ENCODE measurements at regions of chr4 and their contacts with region 1.

Region 1: DNA sequence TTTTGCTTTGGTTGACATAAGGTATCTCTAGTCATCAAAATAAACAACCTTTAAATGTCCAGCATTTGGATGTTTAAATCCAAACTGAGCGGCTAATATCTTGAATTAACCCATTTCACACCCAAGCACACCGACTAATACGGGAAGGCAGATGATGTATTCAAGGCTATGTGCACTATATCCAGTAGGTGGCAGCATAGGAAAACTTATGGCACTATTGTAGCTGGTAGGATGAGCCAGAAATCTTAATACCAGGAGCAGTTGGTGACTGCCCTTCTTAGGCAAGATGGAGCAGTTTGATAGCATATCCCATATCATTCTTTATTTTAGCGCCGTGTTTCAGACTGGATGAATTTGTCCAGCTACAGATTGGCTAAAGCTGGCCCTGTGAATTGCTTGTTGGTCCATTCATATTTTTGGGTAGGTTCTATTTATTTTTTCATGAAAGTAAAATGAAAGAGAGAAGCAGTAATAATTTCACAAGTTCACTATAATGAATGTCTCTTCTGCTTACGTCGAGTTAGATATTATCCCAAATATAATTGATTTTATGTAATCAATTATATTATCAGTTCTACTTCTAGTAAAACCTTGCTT is 24.4 kb downstream of the UCHL1 start:
- DNase-seq: peak; percentile 64
- H3K4me3 ChIP-seq: no peak overlapping the region
- H3K27ac ChIP-seq: no peak overlapping the region
- H3K4me1 ChIP-seq: no peaks in the 10 kb centered on the region
- H3K27me3 ChIP-seq: no peaks in the 10 kb centered on the region
- CTCF ChIP-seq: peak; percentile 75 to 94 (median 83)
- EP300 ChIP-seq: no peak
- POLR2A ChIP-seq: no peak

Region 2: GRCh38 chr4:40699648-40700047 is 581.5 kb before region 1 on chr4:
- intact Hi-C with region 1: no loop called
- DNase-seq: no peak
- H3K4me3 ChIP-seq: no peak overlapping the region
- H3K27ac ChIP-seq: no peak overlapping the region
- H3K4me1 ChIP-seq: no peaks in the 10 kb centered on the region
- H3K27me3 ChIP-seq: no peaks in the 10 kb centered on the region
- CTCF ChIP-seq: no peak
- EP300 ChIP-seq: no peak
- POLR2A ChIP-seq: no peak

Region 3: DNA sequence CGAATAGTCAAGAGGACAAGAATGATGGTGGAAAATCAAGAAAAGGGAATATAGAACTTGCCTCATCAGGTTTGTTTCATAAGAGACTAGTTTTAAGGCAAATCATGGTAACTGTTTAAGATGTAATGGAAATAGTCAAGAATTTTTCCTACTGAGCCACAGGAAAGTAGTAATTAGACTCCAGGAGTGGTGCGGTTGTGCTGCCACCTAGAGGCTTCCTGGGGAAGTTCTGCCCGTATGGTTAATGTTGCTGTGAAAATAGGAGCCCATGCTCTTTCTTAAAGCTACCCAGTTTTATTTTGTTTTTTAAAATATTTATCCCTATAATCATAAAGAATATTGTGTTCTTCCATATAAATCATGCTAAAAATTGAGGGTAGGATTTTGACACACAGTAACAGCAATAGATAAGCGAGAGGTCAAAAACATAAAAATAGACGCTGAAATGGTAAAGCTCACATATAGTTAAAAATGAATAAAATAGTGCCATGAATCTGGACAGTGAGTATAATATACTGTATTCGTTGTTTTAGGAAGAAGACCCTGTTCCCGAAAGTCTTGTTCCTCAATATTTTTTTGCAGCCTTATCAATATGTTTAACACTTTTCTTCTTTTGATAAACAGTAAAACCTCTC is 380.4 kb after region 1 on chr4:
- intact Hi-C with region 1: loop called (anchors 1 kb)
- DNase-seq: no peak
- H3K4me3 ChIP-seq: no peak overlapping the region
- H3K27ac ChIP-seq: no peak overlapping the region
- H3K4me1 ChIP-seq: peaks cover 0 to 6% (median 1%) of the 10 kb centered on the region in 4 donors
- H3K27me3 ChIP-seq: no peaks in the 10 kb centered on the region
- CTCF ChIP-seq: peak; percentile 48 to 95 (median 68)
- EP300 ChIP-seq: no peak
- POLR2A ChIP-seq: no peak

Region 4: DNA sequence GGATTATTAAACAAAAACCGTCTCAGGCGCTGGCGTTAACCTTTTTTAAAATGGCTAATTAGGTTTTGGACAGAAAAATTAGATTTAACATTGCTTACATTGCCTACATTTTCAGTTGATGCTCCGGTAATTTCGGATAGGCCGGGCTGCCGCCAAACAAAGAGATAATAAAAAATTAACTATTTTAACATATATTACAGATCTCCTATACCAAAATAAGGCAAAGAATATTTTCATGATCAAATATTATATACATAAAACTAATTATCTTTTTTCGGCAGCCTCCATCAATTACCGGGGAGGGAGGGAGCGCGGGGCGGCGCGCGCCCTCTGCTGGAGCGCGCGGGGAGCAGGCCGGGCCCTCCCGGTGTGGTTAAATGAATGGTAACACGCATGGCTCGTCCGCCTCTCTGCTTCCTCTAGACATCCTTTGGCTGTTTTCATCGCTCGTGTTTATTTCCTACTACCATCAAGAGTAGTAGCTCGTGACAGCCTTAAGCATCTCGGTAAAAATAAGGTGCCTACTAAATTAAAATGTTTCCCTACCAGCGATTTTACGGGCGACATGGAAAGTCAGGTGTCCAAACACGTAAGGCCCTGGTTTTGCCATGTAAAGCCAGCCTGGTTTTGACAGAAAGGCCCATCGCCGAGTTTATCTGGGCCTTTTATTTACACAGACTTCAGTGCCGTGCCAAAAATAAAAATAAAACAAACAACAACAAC is 601.6 kb after region 1 on chr4:
- intact Hi-C with region 1: loop called (anchors 5 kb)
- DNase-seq: no peak
- H3K4me3 ChIP-seq: peak overlapping the region; percentile 12 to 50 (median 35)
- H3K27ac ChIP-seq: no peak overlapping the region
- H3K4me1 ChIP-seq: peaks cover 0 to 34% (median 27%) of the 10 kb centered on the region in 4 donors
- H3K27me3 ChIP-seq: peaks cover 23 to 66% (median 46%) of the 10 kb centered on the region in 3 donors
- CTCF ChIP-seq: peak; percentile 43 to 90 (median 53)
- EP300 ChIP-seq: no peak
- POLR2A ChIP-seq: no peak

Measured in sigmoid colon (tissue), 7 donors.